T-cell (primary cell): ENCODE measurements at regions of chr3 and their contacts with region 1.

Region 1: DNA sequence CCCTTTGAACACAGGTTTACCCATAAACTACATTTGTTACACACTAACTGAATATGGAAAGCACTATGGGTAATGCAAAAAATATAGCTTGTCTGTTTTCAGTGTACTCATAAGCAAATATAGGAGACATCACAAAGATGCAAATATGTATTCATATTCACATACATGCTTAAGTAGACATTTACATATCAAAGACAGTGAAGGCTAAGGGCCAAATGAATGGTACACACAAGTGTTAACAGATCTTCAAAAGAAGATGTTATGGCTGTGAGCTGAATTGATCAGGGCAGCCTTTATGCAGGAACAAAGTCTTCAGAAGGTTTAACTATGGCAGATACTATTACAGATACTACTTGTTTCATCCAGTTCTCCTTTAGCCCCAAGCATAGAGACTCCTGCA is 384.1 kb downstream of the FHIT start:
- DNase-seq: no peak
- ATAC-seq: no peak
- H3K4me3 ChIP-seq: no peak overlapping the region
- H3K4me3 Mint-ChIP-seq: no peak overlapping the region
- H3K27ac ChIP-seq: no peak overlapping the region
- H3K27ac Mint-ChIP-seq: no peak overlapping the region
- H3K4me1 ChIP-seq: no peaks in the 10 kb centered on the region
- H3K4me1 Mint-ChIP-seq: no peaks in the 10 kb centered on the region
- H3K27me3 ChIP-seq: no peaks in the 10 kb centered on the region
- H3K27me3 Mint-ChIP-seq: no peaks in the 10 kb centered on the region

Region 2: GRCh38 chr3:60456180-60456579 is 411.0 kb before region 1 on chr3:
- CTCF ChIA-PET with region 1: no interaction called
- POLR2A ChIA-PET with region 1: no interaction called
- DNase-seq: no peak
- ATAC-seq: no peak
- H3K4me3 ChIP-seq: no peak overlapping the region
- H3K4me3 Mint-ChIP-seq: no peak overlapping the region
- H3K27ac ChIP-seq: no peak overlapping the region
- H3K27ac Mint-ChIP-seq: no peak overlapping the region
- H3K4me1 ChIP-seq: no peaks in the 10 kb centered on the region
- H3K4me1 Mint-ChIP-seq: peaks cover 4 to 8% (median 4%) of the 10 kb centered on the region in 3 donors
- H3K27me3 ChIP-seq: no peaks in the 10 kb centered on the region
- H3K27me3 Mint-ChIP-seq: no peaks in the 10 kb centered on the region

Region 3: DNA sequence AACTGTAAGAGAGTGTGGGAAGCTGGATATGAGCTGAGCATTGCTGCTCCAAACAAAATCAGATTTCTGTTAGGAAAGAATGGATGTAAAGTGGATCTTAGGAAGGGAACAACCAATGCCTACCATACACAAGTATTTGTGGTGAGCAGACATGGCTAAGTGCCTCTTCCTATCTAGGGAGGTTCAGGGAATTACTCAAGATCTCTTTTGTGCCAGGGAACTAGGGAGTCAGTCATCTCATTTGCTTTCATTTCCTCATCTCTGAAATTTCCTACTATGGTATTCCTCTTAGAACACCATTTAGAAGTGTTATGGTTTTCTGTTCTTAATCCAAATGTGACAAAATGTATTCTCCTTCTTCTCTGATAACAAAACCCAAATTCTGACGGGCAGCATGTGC is 12.4 kb before region 1 on chr3:
- CTCF ChIA-PET with region 1: no interaction called
- POLR2A ChIA-PET with region 1: interaction called in 1 of 2 experiments, 15 read pairs
- DNase-seq: no peak
- ATAC-seq: no peak
- H3K4me3 ChIP-seq: no peak overlapping the region
- H3K4me3 Mint-ChIP-seq: no peak overlapping the region
- H3K27ac ChIP-seq: no peak overlapping the region
- H3K27ac Mint-ChIP-seq: no peak overlapping the region
- H3K4me1 ChIP-seq: no peaks in the 10 kb centered on the region
- H3K4me1 Mint-ChIP-seq: no peaks in the 10 kb centered on the region
- H3K27me3 ChIP-seq: no peaks in the 10 kb centered on the region
- H3K27me3 Mint-ChIP-seq: peaks cover 0 to 3% of the 10 kb centered on the region in 2 donors